ENCODE measurements at regions of chr7 and their contacts with region 1.

Region 1: DNA sequence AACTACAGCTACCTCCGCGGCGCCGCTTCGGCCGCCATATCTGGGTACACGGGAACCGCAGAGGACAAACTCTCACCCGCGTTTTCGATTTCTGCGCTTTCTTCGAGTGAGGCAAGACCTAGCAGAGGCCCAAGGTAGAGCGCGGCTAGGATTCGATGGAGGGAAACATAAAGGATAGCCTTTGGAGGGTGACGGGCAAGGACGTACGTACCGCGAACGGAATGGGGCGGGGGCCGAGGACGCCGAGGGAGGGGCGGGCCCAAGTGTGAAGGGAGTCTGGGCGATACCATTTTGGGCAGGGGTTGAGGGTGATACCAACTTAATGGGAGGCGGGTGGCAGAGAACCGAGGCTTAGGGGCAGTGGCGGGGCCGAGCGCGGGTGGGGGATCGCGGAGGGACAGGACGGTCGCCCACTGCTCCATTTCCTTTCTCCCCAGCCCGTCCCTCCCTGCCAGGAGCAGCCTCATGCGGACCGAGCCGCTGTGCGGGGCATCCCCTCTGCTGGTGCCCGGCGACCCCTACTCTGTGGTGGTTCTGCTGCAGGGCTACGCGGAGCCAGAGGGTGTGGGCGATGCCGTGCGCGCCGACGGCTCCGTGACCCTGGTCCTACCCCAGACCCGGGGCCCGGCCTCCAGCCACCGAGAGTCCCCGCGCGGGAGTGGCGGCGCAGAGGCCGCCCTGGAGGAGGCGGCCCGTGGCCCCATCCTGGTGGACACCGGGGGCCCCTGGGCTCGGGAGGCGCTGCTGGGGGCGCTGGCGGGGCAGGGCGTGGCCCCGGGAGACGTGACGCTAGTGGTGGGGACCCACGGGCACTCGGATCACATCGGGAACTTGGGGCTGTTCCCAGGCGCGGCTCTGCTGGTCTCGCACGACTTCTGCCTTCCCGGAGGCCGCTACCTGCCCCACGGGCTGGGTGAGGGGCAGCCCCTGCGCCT is at the start of gene MBLAC1:
- DNase-seq: peak; percentile 91 to 93
- H3K4me3 ChIP-seq: peak within 1 kb of the TSS; percentile 50 to 51
- H3K27ac ChIP-seq: peak within 1 kb of the TSS; percentile 89 to 93
- H3K4me1 ChIP-seq: peaks cover 0 to 3% of the 10 kb centered on the region in 2 donors
- H3K27me3 ChIP-seq: no peaks in the 10 kb centered on the region
- CTCF ChIP-seq: peak in 2 of 4 experiments; percentile 3 to 8
- POLR2A ChIP-seq: peak in 1 of 2 donors; percentile 42
- total RNA-seq, gene MBLAC1: 1.3 to 12.4 (median 4.6) TPM

Region 2: DNA sequence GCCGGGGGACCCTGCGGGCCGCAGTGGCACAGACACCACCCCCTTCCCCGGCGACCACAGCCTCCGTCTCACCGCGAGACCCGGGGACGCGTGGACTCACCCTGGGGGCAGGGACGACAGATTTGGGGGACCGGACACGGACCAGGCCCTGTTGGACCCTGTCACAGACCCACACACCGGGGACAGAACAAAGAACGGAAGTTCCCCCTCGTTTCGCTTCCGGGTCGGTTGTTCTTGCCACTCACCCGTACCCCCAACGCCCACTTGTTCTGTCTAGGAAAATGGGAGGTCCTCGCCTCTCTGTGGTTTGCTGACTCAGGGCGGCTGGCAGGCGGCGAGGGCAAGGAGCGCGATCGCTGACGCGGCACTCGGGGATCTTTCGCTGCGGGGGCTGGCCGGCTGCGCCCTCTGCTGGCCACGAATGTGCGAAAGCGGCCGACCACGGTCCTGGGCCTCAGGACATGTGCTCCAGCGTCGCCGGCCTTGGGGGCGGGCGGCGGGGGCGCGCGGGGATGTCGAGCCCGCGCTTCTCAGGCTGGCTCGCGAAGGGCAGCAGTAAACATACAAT is 45.6 kb before region 1 on chr7 and contains the start of gene ZNF3:
- intact Hi-C with region 1: loop called (anchors 2 kb)
- DNase-seq: peak; percentile 98 to 99
- H3K4me3 ChIP-seq: peak within 1 kb of the TSS; percentile 75 to 97
- H3K27ac ChIP-seq: peak within 1 kb of the TSS; percentile 73 to 84
- H3K4me1 ChIP-seq: no peaks in the 10 kb centered on the region
- H3K27me3 ChIP-seq: no peaks in the 10 kb centered on the region
- CTCF ChIP-seq: peak; percentile 95 to 98 (median 96)
- POLR2A ChIP-seq: peak; percentile 35 to 75
- total RNA-seq, gene ZNF3: 10.9 to 69.4 (median 50.3) TPM